MCF 10A (cell line): ENCODE measurements at regions of chr6 and their contacts with region 1.

Region 1: DNA sequence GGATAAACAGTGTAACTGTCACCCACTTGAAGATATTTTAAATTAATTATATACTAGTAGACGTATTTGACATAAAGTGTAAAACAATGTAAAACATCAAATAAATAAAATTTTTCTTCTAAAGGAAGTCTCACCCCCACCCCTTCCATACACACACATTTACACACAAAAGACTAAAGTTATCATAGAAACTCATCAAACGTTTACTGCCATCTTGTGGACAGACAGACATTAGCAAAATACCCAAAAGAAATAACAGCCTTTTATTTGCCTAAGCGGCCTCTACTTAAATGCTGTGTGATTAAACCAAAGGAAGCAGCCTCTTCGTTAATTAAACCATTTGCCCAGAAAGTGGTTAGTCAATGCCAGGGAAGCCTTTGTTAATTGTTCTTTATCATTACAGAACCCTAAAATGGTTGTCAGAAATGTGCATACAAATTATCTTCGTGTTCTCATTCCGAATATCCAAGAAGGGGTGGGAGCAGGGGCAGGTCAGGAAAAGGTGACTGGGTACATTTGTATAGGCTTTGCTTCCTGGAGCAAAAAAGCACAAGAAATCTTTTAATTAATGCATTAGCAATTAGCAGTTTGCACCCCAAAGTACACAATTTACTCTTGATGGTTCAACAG is 176.2 kb upstream of the SASH1 start:
- DNase-seq: peak; percentile 71
- H3K4me3 Mint-ChIP-seq: no peak overlapping the region
- H3K27ac Mint-ChIP-seq: no peak overlapping the region
- H3K4me1 Mint-ChIP-seq: no peaks in the 10 kb centered on the region
- H3K27me3 Mint-ChIP-seq: no peaks in the 10 kb centered on the region
- CTCF ChIP-seq: peak; percentile 63

Region 2: GRCh38 chr6:147390909-147391536 is 775.4 kb before region 1 on chr6:
- CTCF ChIA-PET with region 1: interaction called, 5 read pairs
- POLR2A ChIA-PET with region 1: no interaction called
- intact Hi-C with region 1: loop called (anchors 1 kb)
- DNase-seq: peak; percentile 43
- H3K4me3 Mint-ChIP-seq: no peak overlapping the region
- H3K27ac Mint-ChIP-seq: no peak overlapping the region
- H3K4me1 Mint-ChIP-seq: no peaks in the 10 kb centered on the region
- H3K27me3 Mint-ChIP-seq: no peaks in the 10 kb centered on the region
- CTCF ChIP-seq: peak; percentile 30

Region 3: GRCh38 chr6:147774856-147775255 is 391.6 kb before region 1 on chr6:
- CTCF ChIA-PET with region 1: no interaction called
- POLR2A ChIA-PET with region 1: no interaction called
- intact Hi-C with region 1: loop called (anchors 10 kb)
- DNase-seq: peak; percentile 21
- H3K4me3 Mint-ChIP-seq: no peak overlapping the region
- H3K27ac Mint-ChIP-seq: no peak overlapping the region
- H3K4me1 Mint-ChIP-seq: no peaks in the 10 kb centered on the region
- H3K27me3 Mint-ChIP-seq: no peaks in the 10 kb centered on the region
- CTCF ChIP-seq: peak; percentile 17

Region 4: GRCh38 chr6:147970975-147971374 is 195.5 kb before region 1 on chr6:
- CTCF ChIA-PET with region 1: interaction called, 20 read pairs
- POLR2A ChIA-PET with region 1: no interaction called
- intact Hi-C with region 1: loop called (anchors 5 kb)
- DNase-seq: peak; percentile 52
- H3K4me3 Mint-ChIP-seq: no peak overlapping the region
- H3K27ac Mint-ChIP-seq: no peak overlapping the region
- H3K4me1 Mint-ChIP-seq: peaks cover 18% of the 10 kb centered on the region
- H3K27me3 Mint-ChIP-seq: no peaks in the 10 kb centered on the region
- CTCF ChIP-seq: peak; percentile 61

Region 5: DNA sequence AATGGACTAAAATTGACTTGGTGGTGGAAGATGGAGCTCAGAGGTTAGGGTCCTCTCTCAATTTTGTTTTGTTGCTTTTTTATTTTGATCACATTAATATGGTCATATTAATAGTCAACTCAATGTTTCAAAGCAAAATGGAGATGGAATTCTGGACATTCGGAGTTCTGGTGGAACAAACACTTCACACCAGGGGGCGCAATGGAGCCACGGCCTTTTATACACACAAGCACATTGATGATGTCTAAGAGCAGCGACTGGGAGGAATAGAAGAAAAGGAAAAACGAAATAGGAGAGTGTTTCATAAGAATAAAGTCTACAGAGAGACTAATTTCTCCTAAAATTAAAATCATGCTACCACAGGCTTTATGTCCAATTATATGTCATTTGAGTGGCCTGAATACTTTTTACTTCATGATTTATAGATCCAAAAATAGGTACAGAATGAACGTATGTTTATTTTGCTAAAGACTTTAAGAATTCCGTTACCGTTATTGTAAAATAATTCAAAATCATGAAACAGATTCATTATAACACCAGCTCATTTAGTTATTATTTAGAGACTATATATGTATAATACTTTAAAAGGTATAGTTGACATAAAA is 21.4 kb before region 1 on chr6:
- CTCF ChIA-PET with region 1: interaction called, 12 read pairs
- POLR2A ChIA-PET with region 1: no interaction called
- intact Hi-C with region 1: no loop called
- DNase-seq: peak; percentile 76
- H3K4me3 Mint-ChIP-seq: no peak overlapping the region
- H3K27ac Mint-ChIP-seq: no peak overlapping the region
- H3K4me1 Mint-ChIP-seq: peaks cover 11% of the 10 kb centered on the region
- H3K27me3 Mint-ChIP-seq: no peaks in the 10 kb centered on the region
- CTCF ChIP-seq: peak; percentile 37

Region 6: GRCh38 chr6:148649454-148649963 is 483.1 kb after region 1 on chr6:
- CTCF ChIA-PET with region 1: no interaction called
- POLR2A ChIA-PET with region 1: no interaction called
- intact Hi-C with region 1: no loop called
- DNase-seq: no peak
- H3K4me3 Mint-ChIP-seq: no peak overlapping the region
- H3K27ac Mint-ChIP-seq: no peak overlapping the region
- H3K4me1 Mint-ChIP-seq: no peaks in the 10 kb centered on the region
- H3K27me3 Mint-ChIP-seq: no peaks in the 10 kb centered on the region
- CTCF ChIP-seq: no peak